ENCODE measurements at regions of chr3 and their contacts with region 1.

Region 1: DNA sequence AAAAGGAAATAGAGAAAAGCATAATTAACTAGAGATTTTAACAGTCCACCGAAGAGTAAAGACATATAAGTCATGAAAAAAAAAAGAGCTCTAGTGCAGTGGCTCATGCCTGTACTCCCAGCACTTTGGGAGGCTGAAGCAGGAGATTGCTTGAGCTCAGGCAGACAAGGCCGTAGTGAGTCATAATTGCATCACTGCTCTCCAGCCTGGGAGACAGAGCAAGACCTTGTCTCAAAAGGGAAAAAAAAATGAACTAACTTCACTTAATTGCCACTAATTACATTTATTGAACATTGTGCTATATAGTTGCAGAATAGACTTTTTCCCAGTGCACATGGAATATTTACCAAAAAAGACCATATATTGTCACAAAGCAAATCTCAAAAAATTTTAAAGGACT is 221.8 kb downstream of the CBLB start:
- DNase-seq: peak; percentile 59
- H3K4me3 Mint-ChIP-seq: no peak overlapping the region
- H3K27ac Mint-ChIP-seq: peak overlapping the region; percentile 86
- H3K4me1 Mint-ChIP-seq: peaks cover 9% of the 10 kb centered on the region
- H3K27me3 Mint-ChIP-seq: no peaks in the 10 kb centered on the region
- CTCF ChIP-seq: no peak

Region 2: GRCh38 chr3:105579439-105579838 is 67.6 kb before region 1 on chr3:
- CTCF ChIA-PET with region 1: no interaction called
- intact Hi-C with region 1: loop called (anchors 10 kb)
- DNase-seq: no peak
- H3K4me3 Mint-ChIP-seq: no peak overlapping the region
- H3K27ac Mint-ChIP-seq: no peak overlapping the region
- H3K4me1 Mint-ChIP-seq: peaks cover 11% of the 10 kb centered on the region
- H3K27me3 Mint-ChIP-seq: no peaks in the 10 kb centered on the region
- CTCF ChIP-seq: no peak

Region 3: DNA sequence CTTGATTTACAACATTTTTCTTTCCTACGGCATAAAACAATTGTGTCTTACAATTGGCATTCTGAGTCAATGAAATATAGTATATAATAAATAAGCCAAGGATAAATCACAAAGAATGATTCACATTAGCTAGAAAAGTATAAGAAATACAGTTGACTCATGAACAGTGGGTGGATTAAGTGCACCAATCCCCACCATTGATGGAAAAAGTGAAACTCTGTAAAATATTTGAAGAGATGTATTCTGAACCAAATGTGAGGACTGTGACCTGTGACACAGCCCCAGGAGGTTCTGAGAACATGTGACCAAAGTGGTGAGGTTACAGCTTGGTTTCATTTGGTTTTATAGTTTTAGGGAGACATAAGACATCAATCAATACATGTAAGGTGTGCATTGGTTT is 52.8 kb before region 1 on chr3:
- CTCF ChIA-PET with region 1: no interaction called
- intact Hi-C with region 1: no loop called
- DNase-seq: no peak
- H3K4me3 Mint-ChIP-seq: no peak overlapping the region
- H3K27ac Mint-ChIP-seq: no peak overlapping the region
- H3K4me1 Mint-ChIP-seq: peaks cover 19% of the 10 kb centered on the region
- H3K27me3 Mint-ChIP-seq: no peaks in the 10 kb centered on the region
- CTCF ChIP-seq: no peak

Region 4: GRCh38 chr3:106176734-106177133 is 529.7 kb after region 1 on chr3:
- CTCF ChIA-PET with region 1: no interaction called
- intact Hi-C with region 1: no loop called
- DNase-seq: no peak
- H3K4me3 Mint-ChIP-seq: no peak overlapping the region
- H3K27ac Mint-ChIP-seq: no peak overlapping the region
- H3K4me1 Mint-ChIP-seq: no peaks in the 10 kb centered on the region
- H3K27me3 Mint-ChIP-seq: no peaks in the 10 kb centered on the region
- CTCF ChIP-seq: no peak